CD4-positive, alpha-beta T cell (primary cell): ENCODE measurements at regions of chr1 and their contacts with region 1.

Region 1: GRCh38 chr1:64966158-64966971 is at the start of gene JAK1:
- DNase-seq: peak; percentile 80 to 96 (median 91)
- ATAC-seq: peak; percentile 78
- H3K4me3 ChIP-seq: peak within 1 kb of the TSS; percentile 89
- H3K4me3 Mint-ChIP-seq: peak within 1 kb of the TSS; percentile 98
- H3K27ac ChIP-seq: peak within 1 kb of the TSS; percentile 84 to 96
- H3K27ac Mint-ChIP-seq: peak within 1 kb of the TSS; percentile 97
- H3K4me1 ChIP-seq: peaks cover 38% of the 10 kb centered on the region
- H3K4me1 Mint-ChIP-seq: peaks cover 56% of the 10 kb centered on the region
- H3K27me3 ChIP-seq: no peaks in the 10 kb centered on the region
- H3K27me3 Mint-ChIP-seq: no peaks in the 10 kb centered on the region
- CTCF ChIP-seq: no peak
- total RNA-seq, gene JAK1: 240 to 252 TPM

Region 2: GRCh38 chr1:64744492-64745180 is 221.7 kb before region 1 on chr1 and contains the start of gene RAVER2:
- CTCF ChIA-PET with region 1: no interaction called
- POLR2A ChIA-PET with region 1: no interaction called
- intact Hi-C with region 1: loop called in 1 of 2 experiments (anchors 10 kb)
- DNase-seq: peak; percentile 14 to 82 (median 46)
- ATAC-seq: peak; percentile 84
- H3K4me3 ChIP-seq: peak within 1 kb of the TSS; percentile 58
- H3K4me3 Mint-ChIP-seq: peak within 1 kb of the TSS; percentile 98
- H3K27ac ChIP-seq: peak within 1 kb of the TSS in 1 of 2 donors; percentile 17
- H3K27ac Mint-ChIP-seq: peak within 1 kb of the TSS; percentile 69
- H3K4me1 ChIP-seq: peaks cover 15% of the 10 kb centered on the region
- H3K4me1 Mint-ChIP-seq: peaks cover 24% of the 10 kb centered on the region
- H3K27me3 ChIP-seq: no peaks in the 10 kb centered on the region
- H3K27me3 Mint-ChIP-seq: peaks cover 5% of the 10 kb centered on the region
- CTCF ChIP-seq: peak; percentile 24
- total RNA-seq, gene RAVER2: 0.80 to 1.0 TPM

Region 3: GRCh38 chr1:64798872-64799271 is 167.5 kb before region 1 on chr1:
- CTCF ChIA-PET with region 1: no interaction called
- POLR2A ChIA-PET with region 1: no interaction called
- intact Hi-C with region 1: no loop called
- DNase-seq: no peak
- ATAC-seq: no peak
- H3K4me3 ChIP-seq: no peak overlapping the region
- H3K4me3 Mint-ChIP-seq: no peak overlapping the region
- H3K27ac ChIP-seq: no peak overlapping the region
- H3K27ac Mint-ChIP-seq: no peak overlapping the region
- H3K4me1 ChIP-seq: no peaks in the 10 kb centered on the region
- H3K4me1 Mint-ChIP-seq: no peaks in the 10 kb centered on the region
- H3K27me3 ChIP-seq: no peaks in the 10 kb centered on the region
- H3K27me3 Mint-ChIP-seq: no peaks in the 10 kb centered on the region
- CTCF ChIP-seq: no peak

Region 4: GRCh38 chr1:64898107-64898845 is 68.1 kb before region 1 on chr1:
- CTCF ChIA-PET with region 1: no interaction called
- POLR2A ChIA-PET with region 1: interaction called, 13 read pairs
- intact Hi-C with region 1: no loop called
- DNase-seq: peak in 9 of 14 experiments; percentile 10 to 80 (median 19)
- ATAC-seq: peak; percentile 59
- H3K4me3 ChIP-seq: no peak overlapping the region
- H3K4me3 Mint-ChIP-seq: no peak overlapping the region
- H3K27ac ChIP-seq: no peak overlapping the region
- H3K27ac Mint-ChIP-seq: peak overlapping the region; percentile 8
- H3K4me1 ChIP-seq: peaks cover 52% of the 10 kb centered on the region
- H3K4me1 Mint-ChIP-seq: peaks cover 97% of the 10 kb centered on the region
- H3K27me3 ChIP-seq: no peaks in the 10 kb centered on the region
- H3K27me3 Mint-ChIP-seq: no peaks in the 10 kb centered on the region
- CTCF ChIP-seq: no peak

Region 5: GRCh38 chr1:64940025-64940424 is 26.3 kb before region 1 on chr1:
- CTCF ChIA-PET with region 1: interaction called, 3 read pairs
- POLR2A ChIA-PET with region 1: interaction called, 12 read pairs
- intact Hi-C with region 1: no loop called
- DNase-seq: no peak
- ATAC-seq: peak; percentile 62
- H3K4me3 ChIP-seq: no peak overlapping the region
- H3K4me3 Mint-ChIP-seq: peak overlapping the region; percentile 72
- H3K27ac ChIP-seq: no peak overlapping the region
- H3K27ac Mint-ChIP-seq: peak overlapping the region; percentile 69
- H3K4me1 ChIP-seq: peaks cover 40% of the 10 kb centered on the region
- H3K4me1 Mint-ChIP-seq: peaks cover 91% of the 10 kb centered on the region
- H3K27me3 ChIP-seq: no peaks in the 10 kb centered on the region
- H3K27me3 Mint-ChIP-seq: no peaks in the 10 kb centered on the region
- CTCF ChIP-seq: no peak

Region 6: DNA sequence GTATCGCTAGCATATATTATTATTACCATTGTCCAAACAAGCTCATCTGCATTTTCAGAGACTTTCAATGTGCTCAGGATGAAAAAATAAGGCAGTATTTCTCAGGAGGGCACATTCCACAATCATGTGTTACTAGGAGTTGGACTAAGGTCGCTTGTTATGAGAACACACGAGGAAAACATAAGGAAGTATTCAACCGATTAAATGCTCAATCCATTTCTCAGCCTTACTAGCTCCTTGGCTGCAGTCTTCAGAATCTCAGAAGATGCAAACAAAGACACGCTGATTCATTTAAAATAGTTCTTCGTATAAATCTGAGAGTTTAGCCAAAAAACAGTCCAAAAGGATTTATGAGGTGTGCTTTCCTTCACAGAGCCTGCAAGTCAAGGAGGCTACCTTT is 82.0 kb after region 1 on chr1:
- CTCF ChIA-PET with region 1: no interaction called
- POLR2A ChIA-PET with region 1: interaction called, 18 read pairs
- intact Hi-C with region 1: no loop called
- DNase-seq: no peak
- ATAC-seq: no peak
- H3K4me3 ChIP-seq: no peak overlapping the region
- H3K4me3 Mint-ChIP-seq: no peak overlapping the region
- H3K27ac ChIP-seq: no peak overlapping the region
- H3K27ac Mint-ChIP-seq: peak overlapping the region; percentile 39
- H3K4me1 ChIP-seq: peaks cover 34% of the 10 kb centered on the region
- H3K4me1 Mint-ChIP-seq: peaks cover 69% of the 10 kb centered on the region
- H3K27me3 ChIP-seq: no peaks in the 10 kb centered on the region
- H3K27me3 Mint-ChIP-seq: no peaks in the 10 kb centered on the region
- CTCF ChIP-seq: no peak

Region 7: DNA sequence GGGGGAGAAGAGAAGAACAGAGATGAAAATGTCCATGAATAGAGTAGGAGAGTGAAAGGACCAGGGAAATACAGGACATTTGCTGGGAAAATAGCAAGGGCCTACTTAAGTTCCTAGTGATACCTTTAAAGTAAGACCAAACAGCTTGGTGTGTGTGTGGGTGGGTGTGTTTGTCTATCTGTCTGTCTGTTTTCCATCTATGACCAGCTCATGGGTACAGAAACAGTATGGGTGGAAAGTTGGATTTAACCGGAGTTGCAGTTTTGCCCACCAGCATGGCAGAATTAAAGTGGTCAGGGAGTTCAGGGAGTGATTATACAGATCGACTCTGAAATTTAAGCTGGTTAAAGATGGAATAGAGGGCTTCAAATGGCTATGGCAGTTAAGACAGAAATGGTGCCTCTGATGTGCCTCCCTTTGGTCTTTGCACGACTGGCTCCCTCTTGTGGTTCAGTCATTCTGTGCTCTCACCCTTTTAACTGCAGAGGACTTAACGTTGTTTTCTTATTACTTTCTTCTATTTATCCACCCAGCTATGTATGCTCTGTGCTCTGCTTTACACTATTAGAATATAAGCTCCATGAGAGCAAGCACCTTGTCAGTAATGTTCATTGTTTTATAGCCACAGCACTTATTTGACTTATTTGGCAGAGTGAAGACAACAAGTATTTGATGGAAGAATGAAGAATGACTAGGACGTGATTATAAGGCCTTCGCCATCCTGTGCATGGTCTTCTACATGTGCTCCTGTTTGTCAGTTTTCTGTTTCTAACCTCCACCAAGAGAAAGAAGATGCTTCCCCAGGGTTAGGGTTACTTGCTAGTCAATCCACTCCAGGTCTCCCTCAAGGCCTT is 109.0 kb after region 1 on chr1:
- CTCF ChIA-PET with region 1: interaction called, 6 read pairs
- POLR2A ChIA-PET with region 1: interaction called, 11 read pairs
- intact Hi-C with region 1: no loop called
- DNase-seq: peak; percentile 36 to 89 (median 57)
- ATAC-seq: peak; percentile 99
- H3K4me3 ChIP-seq: no peak overlapping the region
- H3K4me3 Mint-ChIP-seq: no peak overlapping the region
- H3K27ac ChIP-seq: no peak overlapping the region
- H3K27ac Mint-ChIP-seq: no peak overlapping the region
- H3K4me1 ChIP-seq: no peaks in the 10 kb centered on the region
- H3K4me1 Mint-ChIP-seq: peaks cover 21% of the 10 kb centered on the region
- H3K27me3 ChIP-seq: no peaks in the 10 kb centered on the region
- H3K27me3 Mint-ChIP-seq: no peaks in the 10 kb centered on the region
- CTCF ChIP-seq: peak; percentile 83